Heart right ventricle (tissue), 16 donors: ENCODE measurements at regions of chr2 and their contacts with region 1.

Region 1: GRCh38 chr2:212392043-212392442 is 146.6 kb downstream of the ERBB4 start:
- DNase-seq: no peak
- ATAC-seq: no peak
- H3K4me3 ChIP-seq: no peak overlapping the region
- H3K27ac ChIP-seq: no peak overlapping the region
- H3K4me1 ChIP-seq: no peaks in the 10 kb centered on the region
- H3K27me3 ChIP-seq: no peaks in the 10 kb centered on the region
- CTCF ChIP-seq: no peak

Region 2: GRCh38 chr2:212242724-212243123 is 149.3 kb before region 1 on chr2:
- intact Hi-C with region 1: no loop called
- DNase-seq: no peak
- ATAC-seq: peak in 1 of 8 donors; percentile 29
- H3K4me3 ChIP-seq: no peak overlapping the region
- H3K27ac ChIP-seq: no peak overlapping the region
- H3K4me1 ChIP-seq: no peaks in the 10 kb centered on the region
- H3K27me3 ChIP-seq: no peaks in the 10 kb centered on the region
- CTCF ChIP-seq: no peak

Region 3: GRCh38 chr2:212436127-212436526 is 44.1 kb after region 1 on chr2:
- intact Hi-C with region 1: no loop called
- DNase-seq: no peak
- ATAC-seq: no peak
- H3K4me3 ChIP-seq: no peak overlapping the region
- H3K27ac ChIP-seq: no peak overlapping the region
- H3K4me1 ChIP-seq: no peaks in the 10 kb centered on the region
- H3K27me3 ChIP-seq: no peaks in the 10 kb centered on the region
- CTCF ChIP-seq: no peak

Region 4: GRCh38 chr2:212448698-212449097 is 56.7 kb after region 1 on chr2:
- intact Hi-C with region 1: no loop called
- DNase-seq: no peak
- ATAC-seq: no peak
- H3K4me3 ChIP-seq: no peak overlapping the region
- H3K27ac ChIP-seq: no peak overlapping the region
- H3K4me1 ChIP-seq: peaks cover 0 to 8% (median 0%) of the 10 kb centered on the region in 9 donors
- H3K27me3 ChIP-seq: no peaks in the 10 kb centered on the region
- CTCF ChIP-seq: no peak

Region 5: GRCh38 chr2:212484563-212485080 is 92.6 kb after region 1 on chr2:
- intact Hi-C with region 1: no loop called
- DNase-seq: no peak
- ATAC-seq: no peak
- H3K4me3 ChIP-seq: no peak overlapping the region
- H3K27ac ChIP-seq: no peak overlapping the region
- H3K4me1 ChIP-seq: no peaks in the 10 kb centered on the region
- H3K27me3 ChIP-seq: no peaks in the 10 kb centered on the region
- CTCF ChIP-seq: no peak

Region 6: DNA sequence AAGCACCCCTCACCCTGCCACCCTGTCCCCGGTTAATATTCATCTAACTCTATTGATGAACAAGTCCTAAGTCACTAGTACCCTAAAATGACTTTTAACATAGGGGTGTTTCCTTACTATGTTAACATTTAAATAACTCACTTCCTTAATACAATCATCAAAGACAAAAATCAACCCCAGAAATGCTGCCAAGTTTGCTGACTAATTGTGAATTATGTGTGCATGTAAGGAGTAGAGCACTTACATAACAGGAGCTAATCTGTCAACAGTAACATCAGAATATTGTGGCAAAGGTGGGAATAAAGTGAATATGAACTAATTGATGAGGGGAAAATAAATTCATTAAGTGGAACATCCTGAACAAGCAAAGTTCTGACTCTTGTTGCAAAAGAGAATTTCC is 227.9 kb after region 1 on chr2:
- intact Hi-C with region 1: loop called in 1 of 10 experiments (anchors 10 kb)
- DNase-seq: no peak
- ATAC-seq: no peak
- H3K4me3 ChIP-seq: no peak overlapping the region
- H3K27ac ChIP-seq: no peak overlapping the region
- H3K4me1 ChIP-seq: no peaks in the 10 kb centered on the region
- H3K27me3 ChIP-seq: no peaks in the 10 kb centered on the region
- CTCF ChIP-seq: no peak

Region 7: DNA sequence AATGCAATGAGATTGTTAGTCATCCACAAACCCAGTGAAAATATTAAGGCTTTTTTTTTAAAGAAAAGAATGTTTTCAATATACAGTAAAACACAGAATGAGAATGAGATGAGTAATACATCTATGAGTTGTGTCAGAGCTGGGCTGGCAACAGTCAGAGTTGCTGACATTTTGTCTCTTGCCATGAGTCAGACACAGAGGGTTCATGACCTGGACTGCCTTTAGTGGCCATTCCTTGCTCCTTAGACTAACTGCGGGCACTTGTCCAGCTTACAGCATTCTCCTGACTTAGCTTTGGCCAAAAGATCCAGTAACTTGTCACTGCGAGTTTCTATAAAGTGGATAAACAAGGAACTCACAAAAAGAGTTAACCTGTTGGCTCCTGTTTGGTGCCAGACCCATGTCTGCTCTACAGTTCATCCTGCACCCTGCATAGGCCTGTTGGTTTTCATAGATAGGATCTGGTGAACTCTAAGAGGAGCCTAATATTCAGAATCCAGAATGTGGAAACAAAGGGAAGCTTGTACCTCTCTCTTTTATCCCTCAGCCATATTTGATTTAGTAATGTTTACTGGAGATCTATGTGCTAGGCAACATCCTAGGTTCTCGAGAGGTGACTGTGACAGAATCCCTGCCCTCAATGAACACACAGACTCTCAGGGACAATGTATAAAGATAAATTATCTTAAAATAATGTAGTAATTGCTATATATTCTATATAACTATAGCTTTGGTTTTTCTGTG is 1627.4 kb after region 1 on chr2:
- intact Hi-C with region 1: loop called in 1 of 10 experiments (anchors 5 kb)
- DNase-seq: peak in 1 of 2 donors; percentile 6
- ATAC-seq: peak in 2 of 8 donors; percentile 62 to 93
- H3K4me3 ChIP-seq: no peak overlapping the region
- H3K27ac ChIP-seq: no peak overlapping the region
- H3K4me1 ChIP-seq: no peaks in the 10 kb centered on the region
- H3K27me3 ChIP-seq: no peaks in the 10 kb centered on the region
- CTCF ChIP-seq: no peak